Activated CD8-positive, alpha-beta memory T cell treated with anti-CD3 and anti-CD28 coated beads, Interleukin-2, amount 10 ng/mL, durations not matched to agents 7 days and 5 days (primary cell): ENCODE measurements at regions of chr12 and their contacts with region 1.

Region 1: DNA sequence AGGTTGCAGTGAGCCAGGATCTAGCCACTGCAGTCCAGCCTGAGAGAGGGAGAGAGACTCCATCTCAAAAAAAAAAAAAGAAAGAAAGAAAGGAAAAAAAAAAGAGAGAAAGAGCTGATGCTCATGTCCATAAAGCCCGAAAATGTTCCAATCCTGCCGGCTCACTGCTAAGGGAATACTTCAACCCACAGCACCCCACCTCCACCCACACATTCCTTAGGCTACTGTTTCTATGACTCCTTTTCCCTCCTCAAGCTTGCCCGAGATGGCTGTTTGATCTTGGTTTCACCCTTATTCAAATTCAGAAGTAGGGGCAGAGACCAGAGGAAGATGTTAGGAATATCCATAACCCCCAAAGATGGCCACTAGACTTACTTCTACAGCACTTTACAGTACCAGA is 59.5 kb upstream of the RASSF3 start:
- DNase-seq: no peak
- ATAC-seq: no peak
- H3K4me3 Mint-ChIP-seq: no peak overlapping the region
- H3K27ac Mint-ChIP-seq: no peak overlapping the region
- H3K4me1 Mint-ChIP-seq: peaks cover 2% of the 10 kb centered on the region
- H3K27me3 Mint-ChIP-seq: no peaks in the 10 kb centered on the region

Region 2: GRCh38 chr12:64065881-64066451 is 484.8 kb before region 1 on chr12:
- CTCF ChIA-PET with region 1: no interaction called
- DNase-seq: no peak
- ATAC-seq: no peak
- H3K4me3 Mint-ChIP-seq: no peak overlapping the region
- H3K27ac Mint-ChIP-seq: no peak overlapping the region
- H3K4me1 Mint-ChIP-seq: no peaks in the 10 kb centered on the region
- H3K27me3 Mint-ChIP-seq: no peaks in the 10 kb centered on the region

Region 3: GRCh38 chr12:64469455-64470142 is 81.2 kb before region 1 on chr12:
- CTCF ChIA-PET with region 1: no interaction called
- DNase-seq: no peak
- ATAC-seq: no peak
- H3K4me3 Mint-ChIP-seq: no peak overlapping the region
- H3K27ac Mint-ChIP-seq: no peak overlapping the region
- H3K4me1 Mint-ChIP-seq: no peaks in the 10 kb centered on the region
- H3K27me3 Mint-ChIP-seq: no peaks in the 10 kb centered on the region

Region 4: DNA sequence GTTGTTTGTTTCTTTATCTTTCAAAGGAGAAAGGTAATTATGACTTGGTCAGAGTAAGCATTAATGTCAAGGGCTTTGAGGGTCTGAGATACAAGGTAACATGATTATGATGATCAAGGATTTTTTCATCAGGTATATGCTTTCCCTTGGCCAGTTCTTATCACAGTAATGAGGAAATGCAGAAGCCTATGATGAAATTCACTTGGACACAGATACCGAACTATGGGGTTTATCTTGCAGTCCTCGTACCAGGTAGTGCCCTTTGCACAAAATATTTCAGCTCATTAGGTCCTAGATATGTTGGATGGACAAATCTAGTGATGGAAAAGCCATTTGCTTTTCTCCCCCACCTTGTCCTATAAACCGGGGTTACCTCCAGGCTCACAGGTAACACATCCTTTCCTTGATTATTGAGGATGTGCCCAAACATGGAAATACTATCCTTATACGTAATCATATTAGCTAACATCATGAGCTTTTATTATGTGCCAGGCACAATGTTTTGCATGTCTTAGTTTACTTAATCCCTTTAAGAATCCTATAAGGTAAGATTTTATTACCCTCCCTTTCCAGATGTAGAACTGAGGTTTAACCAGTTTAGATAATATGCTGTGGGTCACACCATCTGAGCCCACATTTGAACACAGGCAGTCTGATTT is 52.6 kb after region 1 on chr12:
- CTCF ChIA-PET with region 1: interaction called, 15 read pairs
- DNase-seq: no peak
- ATAC-seq: no peak
- H3K4me3 Mint-ChIP-seq: no peak overlapping the region
- H3K27ac Mint-ChIP-seq: no peak overlapping the region
- H3K4me1 Mint-ChIP-seq: peaks cover 18% of the 10 kb centered on the region
- H3K27me3 Mint-ChIP-seq: no peaks in the 10 kb centered on the region

Region 5: GRCh38 chr12:64610149-64610678 is 59.5 kb after region 1 on chr12 and contains the start of gene RASSF3:
- CTCF ChIA-PET with region 1: interaction called, 15 read pairs
- DNase-seq: peak; percentile 88
- ATAC-seq: peak; percentile 71
- H3K4me3 Mint-ChIP-seq: peak within 1 kb of the TSS; percentile 84
- H3K27ac Mint-ChIP-seq: peak within 1 kb of the TSS; percentile 96
- H3K4me1 Mint-ChIP-seq: peaks cover 39% of the 10 kb centered on the region
- H3K27me3 Mint-ChIP-seq: no peaks in the 10 kb centered on the region
- total RNA-seq, gene RASSF3: 45.5 to 61.5 TPM

Region 6: GRCh38 chr12:64688219-64688618 is 137.5 kb after region 1 on chr12:
- CTCF ChIA-PET with region 1: interaction called, 14 read pairs
- DNase-seq: no peak
- ATAC-seq: no peak
- H3K4me3 Mint-ChIP-seq: no peak overlapping the region
- H3K27ac Mint-ChIP-seq: peak overlapping the region; percentile 62
- H3K4me1 Mint-ChIP-seq: peaks cover 54% of the 10 kb centered on the region
- H3K27me3 Mint-ChIP-seq: no peaks in the 10 kb centered on the region

Region 7: GRCh38 chr12:64714551-64714968 is 163.8 kb after region 1 on chr12:
- CTCF ChIA-PET with region 1: interaction called, 18 read pairs
- DNase-seq: peak; percentile 82
- ATAC-seq: peak; percentile 98
- H3K4me3 Mint-ChIP-seq: peak overlapping the region; percentile 39
- H3K27ac Mint-ChIP-seq: peak overlapping the region; percentile 84
- H3K4me1 Mint-ChIP-seq: peaks cover 36% of the 10 kb centered on the region
- H3K27me3 Mint-ChIP-seq: no peaks in the 10 kb centered on the region